ENCODE measurements at regions of chr4 and their contacts with region 1.

Region 1: GRCh38 chr4:145732895-145733880 is 53.2 kb downstream of the C4orf51 start:
- DNase-seq: peak; percentile 91
- H3K4me3 Mint-ChIP-seq: peak overlapping the region; percentile 75
- H3K27ac Mint-ChIP-seq: peak overlapping the region; percentile 36
- H3K4me1 Mint-ChIP-seq: peaks cover 7% of the 10 kb centered on the region
- H3K27me3 Mint-ChIP-seq: peaks cover 10% of the 10 kb centered on the region

Region 2: GRCh38 chr4:144754562-144755410 is 978.4 kb before region 1 on chr4:
- CTCF ChIA-PET with region 1: no interaction called
- intact Hi-C with region 1: no loop called
- DNase-seq: no peak
- H3K4me3 Mint-ChIP-seq: no peak overlapping the region
- H3K27ac Mint-ChIP-seq: no peak overlapping the region
- H3K4me1 Mint-ChIP-seq: no peaks in the 10 kb centered on the region
- H3K27me3 Mint-ChIP-seq: no peaks in the 10 kb centered on the region

Region 3: GRCh38 chr4:145308598-145308997 is 424.6 kb before region 1 on chr4:
- CTCF ChIA-PET with region 1: no interaction called
- intact Hi-C with region 1: loop called (anchors 5 kb)
- DNase-seq: peak; percentile 26
- H3K4me3 Mint-ChIP-seq: no peak overlapping the region
- H3K27ac Mint-ChIP-seq: peak overlapping the region; percentile 72
- H3K4me1 Mint-ChIP-seq: peaks cover 34% of the 10 kb centered on the region
- H3K27me3 Mint-ChIP-seq: peaks cover 4% of the 10 kb centered on the region

Region 4: GRCh38 chr4:145481164-145481941 is 251.8 kb before region 1 on chr4 and contains the start of gene SMAD1:
- CTCF ChIA-PET with region 1: no interaction called
- intact Hi-C with region 1: loop called (anchors 10 kb)
- DNase-seq: peak; percentile 29
- H3K4me3 Mint-ChIP-seq: peak within 1 kb of the TSS; percentile 73
- H3K27ac Mint-ChIP-seq: no peak within 1 kb of the TSS
- H3K4me1 Mint-ChIP-seq: peaks cover 5% of the 10 kb centered on the region
- H3K27me3 Mint-ChIP-seq: peaks cover 31% of the 10 kb centered on the region
- total RNA-seq, gene SMAD1: 0.57 to 0.79 TPM